ENCODE measurements at regions of chrX and their contacts with region 1.

Region 1: DNA sequence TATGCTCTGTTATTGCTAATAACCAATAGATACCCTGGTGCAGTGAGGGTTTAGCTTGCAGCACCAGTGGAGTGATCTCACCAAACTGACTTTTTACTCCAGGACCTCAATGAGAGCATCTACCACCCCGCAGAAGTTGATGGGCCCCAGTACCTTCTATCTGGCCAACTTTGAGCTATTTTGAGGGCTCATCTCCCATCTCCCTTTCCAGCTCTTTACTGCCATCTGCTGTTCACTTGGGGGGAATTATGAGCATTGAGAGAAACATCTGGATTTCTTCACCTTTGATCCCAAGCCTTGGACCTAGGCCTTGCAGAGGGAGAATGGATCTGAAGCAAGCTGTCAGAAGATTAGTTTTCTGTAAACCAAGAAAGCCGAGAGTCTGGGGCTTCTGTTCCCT is 143.6 kb downstream of the TMEM164 start:
- DNase-seq: peak in 1 of 3 donors; percentile 54
- ATAC-seq: peak; percentile 80
- H3K4me3 ChIP-seq: no peak overlapping the region
- H3K4me1 ChIP-seq: peaks cover 2% of the 10 kb centered on the region
- CTCF ChIP-seq: no peak

Region 2: GRCh38 chrX:109911046-109911445 is 235.5 kb before region 1 on chrX:
- intact Hi-C with region 1: loop called in 1 of 2 experiments (anchors 10 kb)
- DNase-seq: no peak
- ATAC-seq: no peak
- H3K4me3 ChIP-seq: no peak overlapping the region
- H3K4me1 ChIP-seq: no peaks in the 10 kb centered on the region
- CTCF ChIP-seq: no peak

Measured in mucosa of descending colon (tissue), 3 donors.